Activated CD4-positive, alpha-beta T cell treated with anti-CD3 and anti-CD28 coated beads for 36 hours (primary cell): ENCODE measurements at regions of chr20 and their contacts with region 1.

Region 1: DNA sequence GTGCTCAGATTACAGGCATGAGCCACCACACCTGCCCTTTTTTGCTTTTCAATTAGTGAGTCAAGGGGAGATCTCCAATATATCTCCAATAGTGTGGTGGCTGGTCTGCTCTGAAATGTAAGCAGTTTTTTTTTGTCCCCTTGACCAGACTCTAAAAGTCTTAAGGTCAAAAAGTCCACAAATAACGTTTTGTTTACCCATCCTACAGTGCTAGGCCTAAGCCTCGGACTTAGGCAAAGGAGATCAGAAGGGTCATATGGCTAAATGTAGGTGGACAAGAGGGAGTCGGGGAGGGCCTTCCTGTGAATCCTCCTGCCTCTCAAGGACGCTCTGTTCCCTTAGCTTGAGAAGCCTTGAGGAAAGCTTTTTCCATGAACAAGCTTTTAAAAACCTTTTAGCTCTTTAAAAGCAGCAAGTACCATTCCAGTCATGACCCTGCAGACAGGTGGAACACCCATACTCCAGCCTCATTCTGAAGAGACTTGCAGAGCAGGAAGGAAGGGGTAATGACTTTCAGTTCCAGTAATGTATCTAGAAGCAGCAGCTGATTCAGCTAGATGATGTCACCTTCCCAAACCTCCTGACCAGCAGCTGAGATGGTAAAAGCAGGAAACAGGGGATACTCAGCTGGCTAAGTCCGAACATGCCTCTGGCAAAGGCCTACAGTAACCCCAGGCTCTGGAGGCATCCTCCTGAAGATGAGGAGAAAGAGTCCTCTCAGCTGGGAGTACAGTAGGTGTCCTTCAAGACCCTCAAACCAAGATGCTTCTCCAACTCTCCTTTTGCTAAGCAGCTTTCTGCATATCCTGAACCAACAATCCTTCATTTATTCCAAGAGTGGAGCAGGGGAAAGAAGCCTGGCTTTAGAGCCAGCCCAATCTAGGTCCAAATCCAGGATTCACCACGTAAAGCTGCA is 23.6 kb downstream of the BCL2L1 start:
- DNase-seq: peak; percentile 46
- ATAC-seq: peak; percentile 93
- H3K4me3 Mint-ChIP-seq: peak overlapping the region; percentile 26
- H3K27ac Mint-ChIP-seq: peak overlapping the region; percentile 89
- H3K4me1 Mint-ChIP-seq: peaks cover 68% of the 10 kb centered on the region
- H3K27me3 Mint-ChIP-seq: no peaks in the 10 kb centered on the region

Region 2: GRCh38 chr20:31712112-31712553 is 13.1 kb after region 1 on chr20:
- CTCF ChIA-PET with region 1: interaction called, 14 read pairs
- POLR2A ChIA-PET with region 1: interaction called, 3 read pairs
- intact Hi-C with region 1: loop called in 1 of 2 experiments (anchors 1 kb)
- DNase-seq: no peak
- ATAC-seq: no peak
- H3K4me3 Mint-ChIP-seq: no peak overlapping the region
- H3K27ac Mint-ChIP-seq: peak overlapping the region; percentile 72
- H3K4me1 Mint-ChIP-seq: peaks cover 88% of the 10 kb centered on the region
- H3K27me3 Mint-ChIP-seq: no peaks in the 10 kb centered on the region

Region 3: DNA sequence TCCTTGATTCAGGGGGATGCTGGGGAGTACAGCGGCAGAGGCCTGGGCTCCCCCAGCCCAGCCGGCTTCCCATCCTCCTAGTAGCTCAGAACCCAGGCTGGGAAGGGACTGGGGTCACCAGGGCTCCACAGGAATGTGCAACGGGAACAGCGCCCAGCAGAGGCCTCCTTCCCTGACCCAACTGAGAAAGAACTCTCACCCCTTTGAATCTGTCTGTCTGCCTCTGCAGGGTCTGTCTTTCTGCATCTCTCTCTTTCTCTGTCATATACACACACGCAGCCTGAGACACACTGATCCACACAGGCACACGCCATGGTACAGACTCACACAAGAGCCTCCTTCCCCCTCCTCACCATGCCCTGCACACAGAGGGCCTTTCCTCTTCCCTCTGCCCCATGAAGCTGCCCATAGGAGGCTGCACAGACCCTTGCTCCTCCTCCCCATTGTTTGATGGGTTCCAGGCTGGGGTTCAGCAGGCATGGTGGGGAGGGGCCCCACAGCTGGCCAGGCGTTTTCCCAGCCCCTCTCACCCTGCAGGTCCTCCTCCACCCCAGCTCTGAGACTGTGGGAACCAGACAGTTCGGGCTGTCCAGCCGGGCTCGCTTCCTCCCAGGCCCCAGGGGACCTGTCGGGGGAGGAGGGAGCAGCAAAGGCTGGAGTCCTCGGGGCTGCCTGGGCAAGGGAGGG is 143.6 kb after region 1 on chr20:
- CTCF ChIA-PET with region 1: no interaction called
- POLR2A ChIA-PET with region 1: no interaction called
- intact Hi-C with region 1: no loop called
- DNase-seq: no peak
- ATAC-seq: no peak
- H3K4me3 Mint-ChIP-seq: no peak overlapping the region
- H3K27ac Mint-ChIP-seq: no peak overlapping the region
- H3K4me1 Mint-ChIP-seq: no peaks in the 10 kb centered on the region
- H3K27me3 Mint-ChIP-seq: no peaks in the 10 kb centered on the region